PC-3 (cell line): ENCODE measurements at regions of chr1 and their contacts with region 1.

Region 1: DNA sequence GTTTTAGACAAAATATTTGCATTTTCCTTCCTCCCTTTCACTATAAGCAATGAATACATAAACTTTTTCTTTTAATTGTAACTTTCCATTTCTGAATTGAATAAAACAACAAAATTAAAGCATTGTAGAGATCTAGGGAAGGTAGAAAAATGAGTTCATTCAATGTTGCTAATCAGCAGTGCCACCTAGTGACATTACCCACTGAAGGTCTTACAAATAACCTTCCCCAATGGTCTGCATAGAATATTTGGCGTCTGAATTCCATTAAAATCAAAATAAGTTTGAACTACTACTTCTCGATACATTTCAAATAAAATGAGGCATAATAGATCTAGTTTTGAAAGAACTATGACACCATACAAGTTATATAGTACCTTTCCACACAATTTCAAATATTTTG is 19.6 kb downstream of the FH start:
- DNase-seq: peak; percentile 82
- ATAC-seq: peak; percentile 82
- H3K4me3 ChIP-seq: no peak overlapping the region
- H3K27ac ChIP-seq: no peak overlapping the region
- H3K4me1 ChIP-seq: no peaks in the 10 kb centered on the region
- H3K27me3 ChIP-seq: no peaks in the 10 kb centered on the region
- CTCF ChIP-seq: peak; percentile 98

Region 2: GRCh38 chr1:240888039-240888786 is 611.7 kb before region 1 on chr1:
- CTCF ChIA-PET with region 1: no interaction called
- POLR2A ChIA-PET with region 1: no interaction called
- intact Hi-C with region 1: loop called (anchors 2 kb)
- DNase-seq: peak; percentile 83
- ATAC-seq: peak; percentile 64
- H3K4me3 ChIP-seq: no peak overlapping the region
- H3K27ac ChIP-seq: no peak overlapping the region
- H3K4me1 ChIP-seq: no peaks in the 10 kb centered on the region
- H3K27me3 ChIP-seq: peaks cover 25% of the 10 kb centered on the region
- CTCF ChIP-seq: peak; percentile 99

Region 3: DNA sequence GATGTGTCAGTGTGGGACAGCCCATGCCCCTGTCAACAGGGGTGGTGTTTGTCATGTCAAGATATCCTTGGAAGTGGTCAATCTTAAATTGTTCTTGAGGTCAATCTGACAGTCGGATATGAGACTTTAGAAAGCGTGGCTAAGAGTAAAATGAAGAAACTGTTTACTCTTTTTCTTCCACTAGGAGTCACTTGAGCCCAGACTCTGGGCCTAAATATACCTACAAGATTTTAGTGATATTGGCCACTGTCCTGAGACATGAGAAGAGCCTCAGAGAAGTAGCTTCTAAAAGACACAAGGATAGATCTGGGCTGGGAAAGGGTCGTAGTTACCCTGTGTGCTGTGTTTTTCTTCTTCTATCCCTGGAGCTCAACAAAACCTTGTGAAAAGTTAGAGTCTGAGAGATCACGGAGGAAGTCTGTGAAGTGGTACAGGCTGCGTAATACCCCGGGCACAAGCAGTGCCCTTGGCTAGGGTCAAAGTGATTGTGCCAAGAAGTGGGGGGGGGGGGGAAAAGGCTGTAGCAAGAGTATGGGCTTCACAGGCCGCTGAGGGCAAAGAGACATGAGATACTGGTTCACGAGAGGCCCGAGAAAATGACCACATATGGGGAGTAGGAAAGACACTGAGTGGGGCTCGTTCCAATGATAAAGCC is 532.7 kb before region 1 on chr1:
- CTCF ChIA-PET with region 1: no interaction called
- POLR2A ChIA-PET with region 1: no interaction called
- intact Hi-C with region 1: loop called (anchors 1 kb)
- DNase-seq: peak; percentile 84
- ATAC-seq: peak; percentile 60
- H3K4me3 ChIP-seq: no peak overlapping the region
- H3K27ac ChIP-seq: no peak overlapping the region
- H3K4me1 ChIP-seq: peaks cover 10% of the 10 kb centered on the region; the same call in 1 of the 2 replicates
- H3K27me3 ChIP-seq: peaks cover 86% of the 10 kb centered on the region
- CTCF ChIP-seq: peak; percentile 91

Region 4: DNA sequence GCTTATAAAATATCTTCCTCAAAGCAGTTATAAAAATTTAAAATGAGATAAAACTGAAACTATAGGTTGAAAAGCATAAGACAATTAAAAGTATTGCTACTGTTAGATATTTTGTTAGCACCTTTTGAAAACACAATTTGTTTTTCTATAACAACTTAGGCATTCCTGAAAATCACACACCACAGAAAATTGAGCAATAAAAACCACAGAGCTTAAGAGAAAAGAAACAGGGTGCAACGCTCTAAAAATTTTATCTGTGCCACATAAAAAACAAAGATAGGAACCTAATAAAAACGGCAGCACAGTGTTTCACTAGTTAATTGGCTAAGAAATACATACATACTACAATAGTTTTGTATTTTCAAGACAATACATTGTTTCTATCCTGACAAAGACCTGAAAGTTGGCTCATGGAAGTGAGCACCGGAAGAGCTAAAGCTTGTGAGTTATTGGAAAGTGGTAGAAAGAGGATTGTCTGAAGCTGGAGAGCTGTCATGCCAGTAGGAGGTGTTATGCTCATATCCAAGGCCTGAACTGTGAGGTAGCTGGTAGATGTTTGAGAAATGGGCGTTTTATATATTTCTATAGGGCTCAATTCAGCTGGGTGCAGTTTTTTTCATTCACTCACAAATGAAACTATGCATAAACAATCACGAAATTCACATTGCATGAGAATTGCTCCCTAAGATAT is 188.7 kb before region 1 on chr1:
- CTCF ChIA-PET with region 1: no interaction called
- POLR2A ChIA-PET with region 1: no interaction called
- intact Hi-C with region 1: loop called (anchors 5 kb)
- DNase-seq: peak; percentile 43
- ATAC-seq: peak; percentile 52
- H3K4me3 ChIP-seq: no peak overlapping the region
- H3K27ac ChIP-seq: no peak overlapping the region
- H3K4me1 ChIP-seq: peaks cover 14% of the 10 kb centered on the region
- H3K27me3 ChIP-seq: no peaks in the 10 kb centered on the region; the same call in none of the 2 replicates
- CTCF ChIP-seq: peak; percentile 55

Region 5: DNA sequence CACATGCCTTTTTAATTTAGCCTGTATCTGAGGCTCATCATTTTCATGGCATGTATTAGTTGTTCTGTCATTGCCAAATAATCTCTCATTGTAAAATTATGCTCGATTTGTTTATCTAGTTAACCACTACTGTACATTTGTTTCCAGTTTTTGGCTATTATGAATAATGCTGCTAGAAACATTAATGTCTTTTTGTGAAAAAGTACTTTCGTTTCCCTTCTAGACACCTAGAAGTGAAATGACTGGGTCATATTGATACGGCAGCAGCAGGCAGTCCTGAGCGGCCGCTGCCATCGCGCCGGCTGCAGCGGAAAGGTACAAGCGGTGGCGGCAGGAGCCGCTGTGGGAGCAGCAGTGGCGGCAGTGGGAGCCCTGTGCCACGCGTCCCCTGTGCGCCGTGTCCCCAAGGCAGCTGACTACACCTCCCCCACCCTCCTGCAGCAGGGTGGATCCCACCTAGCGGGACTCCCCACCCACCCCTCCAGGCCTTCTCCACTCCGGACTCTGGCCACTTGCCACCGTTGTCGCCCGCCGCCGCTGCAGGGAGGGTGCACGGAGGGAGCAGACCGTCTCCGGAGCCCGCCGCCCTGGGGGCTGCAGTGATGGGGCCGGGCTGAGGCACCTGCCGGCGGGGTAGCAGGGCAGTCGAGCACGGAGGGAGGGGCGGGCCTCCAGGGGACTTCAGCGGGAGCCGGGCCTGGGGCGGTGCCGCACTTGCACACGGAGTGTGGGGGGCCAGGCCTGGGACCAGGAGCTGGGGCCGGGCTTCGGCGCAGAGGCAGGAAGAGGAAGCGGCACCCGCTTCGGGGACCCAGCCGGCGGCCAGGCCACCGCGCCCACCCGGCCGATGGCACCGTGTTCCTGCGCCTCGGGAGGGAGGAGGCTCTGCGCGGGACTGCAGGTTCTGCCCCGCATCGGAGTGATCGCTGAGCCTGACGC is 76.1 kb before region 1 on chr1:
- CTCF ChIA-PET with region 1: no interaction called
- POLR2A ChIA-PET with region 1: no interaction called
- intact Hi-C with region 1: loop called (anchors 1 kb)
- DNase-seq: peak; percentile 74
- ATAC-seq: peak; percentile 87
- H3K4me3 ChIP-seq: peak overlapping the region; percentile 78
- H3K27ac ChIP-seq: no peak overlapping the region
- H3K4me1 ChIP-seq: peaks cover 24% of the 10 kb centered on the region
- H3K27me3 ChIP-seq: no peaks in the 10 kb centered on the region
- CTCF ChIP-seq: peak; percentile 70